ENCODE measurements at regions of chr16 and their contacts with region 1.

Region 1: GRCh38 chr16:23060458-23061320 is 88.6 kb downstream of the USP31 start:
- DNase-seq: peak; percentile 48
- ATAC-seq: peak; percentile 91
- H3K4me3 ChIP-seq: no peak overlapping the region
- H3K27ac ChIP-seq: no peak overlapping the region
- H3K4me1 ChIP-seq: peaks cover 6% of the 10 kb centered on the region; the same call in 1 of the 2 replicates
- H3K27me3 ChIP-seq: peaks cover 6% of the 10 kb centered on the region; the same call in 1 of the 2 replicates
- CTCF ChIP-seq: peak; percentile 88

Region 2: GRCh38 chr16:22898874-22899348 is 161.8 kb before region 1 on chr16:
- CTCF ChIA-PET with region 1: no interaction called
- POLR2A ChIA-PET with region 1: no interaction called
- in situ Hi-C with region 1: no loop called
- intact Hi-C with region 1: loop called (anchors 2 kb)
- DNase-seq: peak; percentile 30
- ATAC-seq: peak; percentile 85
- H3K4me3 ChIP-seq: no peak overlapping the region
- H3K27ac ChIP-seq: no peak overlapping the region
- H3K4me1 ChIP-seq: no peaks in the 10 kb centered on the region
- H3K27me3 ChIP-seq: peaks cover 40% of the 10 kb centered on the region
- CTCF ChIP-seq: peak; percentile 84

Region 3: DNA sequence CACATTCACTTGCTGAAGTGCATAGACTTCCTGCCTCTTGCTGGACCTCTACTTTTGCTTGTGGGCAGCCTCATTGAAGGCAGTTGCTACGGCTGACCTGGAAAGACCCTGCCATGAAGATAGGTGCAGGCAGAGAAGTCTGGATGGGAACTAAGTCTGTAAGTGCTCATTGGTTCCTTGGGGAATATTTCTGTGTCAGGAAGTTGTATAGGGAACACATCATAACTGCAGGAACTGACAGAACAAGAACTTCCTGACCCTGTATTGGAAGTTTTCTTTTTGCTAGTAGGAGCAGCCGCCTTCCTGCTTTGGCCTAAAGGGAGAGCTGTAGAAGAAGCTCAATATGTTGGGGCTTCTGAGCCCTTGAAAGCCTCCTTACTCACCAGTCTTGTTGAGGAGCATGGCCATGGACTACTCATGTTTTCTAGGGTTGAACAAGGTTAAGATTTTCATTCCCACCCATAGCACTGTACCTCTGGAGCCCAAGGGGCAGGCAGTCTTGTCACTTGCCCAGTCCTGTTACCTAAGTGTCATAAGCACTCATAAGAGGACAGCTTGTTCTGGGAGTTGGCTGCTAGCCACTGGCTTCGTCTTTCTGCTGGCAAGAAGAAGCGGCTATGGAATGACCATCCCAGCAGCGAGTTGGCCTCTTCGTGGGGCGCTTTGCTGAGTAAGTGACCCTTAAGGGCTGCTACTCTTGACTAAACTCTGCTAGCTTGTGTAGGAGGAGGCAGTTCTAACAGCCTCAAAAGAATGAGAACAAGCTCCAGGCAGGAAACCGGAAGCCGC is 504.1 kb after region 1 on chr16:
- CTCF ChIA-PET with region 1: no interaction called
- POLR2A ChIA-PET with region 1: no interaction called
- in situ Hi-C with region 1: no loop called
- intact Hi-C with region 1: no loop called
- DNase-seq: no peak
- ATAC-seq: no peak
- H3K4me3 ChIP-seq: no peak overlapping the region
- H3K27ac ChIP-seq: no peak overlapping the region
- H3K4me1 ChIP-seq: no peaks in the 10 kb centered on the region
- H3K27me3 ChIP-seq: no peaks in the 10 kb centered on the region
- CTCF ChIP-seq: no peak

Measured in Panc1 (cell line).